AG04449 (cell line): ENCODE measurements at regions of chr7 and their contacts with region 1.

Region 1: GRCh38 chr7:143331179-143331820 is 15.4 kb downstream of the CLCN1 start:
- DNase-seq: peak; percentile 81
- H3K4me3 ChIP-seq: no peak overlapping the region
- CTCF ChIP-seq: no peak

Region 2: DNA sequence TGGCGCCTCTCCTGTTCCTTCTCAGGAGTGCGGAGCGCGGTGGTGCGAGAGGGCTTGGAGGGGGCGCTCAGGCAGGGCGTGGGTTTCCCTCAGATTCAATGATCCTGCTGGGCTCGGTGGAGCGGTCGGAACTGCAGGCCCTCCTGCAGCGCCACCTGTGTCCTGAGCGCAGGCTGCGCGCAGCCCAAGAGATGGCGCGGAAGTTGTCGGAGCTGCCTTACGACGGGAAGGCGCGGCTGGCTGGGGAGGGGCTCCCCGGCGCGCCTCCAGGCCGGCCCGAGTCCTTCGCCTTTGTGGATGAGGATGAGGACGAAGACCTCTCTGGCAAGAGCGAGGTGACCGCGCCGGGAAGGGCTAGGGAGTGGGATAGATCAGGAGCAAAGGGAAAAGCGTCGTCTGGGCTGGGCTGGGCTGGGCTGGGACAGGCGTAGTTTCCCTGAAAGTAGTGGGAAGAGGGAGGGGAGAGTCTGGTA is 14.2 kb after region 1 on chr7:
- CTCF ChIA-PET with region 1: interaction called, 26 read pairs
- POLR2A ChIA-PET with region 1: no interaction called
- DNase-seq: no peak
- H3K4me3 ChIP-seq: peak overlapping the region; percentile 6; the same call in 1 of the 2 replicates
- CTCF ChIP-seq: peak; percentile 63

Region 3: GRCh38 chr7:143458263-143458662 is 127.0 kb after region 1 on chr7:
- CTCF ChIA-PET with region 1: no interaction called
- POLR2A ChIA-PET with region 1: no interaction called
- DNase-seq: peak; percentile 44
- H3K4me3 ChIP-seq: no peak overlapping the region
- CTCF ChIP-seq: no peak